GM12878 (cell line): ENCODE measurements at regions of chr12 and their contacts with region 1.

Region 1: GRCh38 chr12:96985480-96986362 is 78.7 kb downstream of the NEDD1 start:
- DNase-seq: no peak
- ATAC-seq: peak; percentile 95
- H3K4me3 ChIP-seq: peak overlapping the region; percentile 28; the same call in 1 of the 2 replicates
- H3K27ac ChIP-seq: no peak overlapping the region
- H3K4me1 ChIP-seq: peaks cover 5% of the 10 kb centered on the region
- H3K27me3 ChIP-seq: peaks cover 0 to 6% of the 10 kb centered on the region in 2 experiments; a peak in 3 of 4 replicates
- CTCF ChIP-seq: peak; percentile 78 to 90 (median 80)
- EP300 ChIP-seq: no peak
- POLR2A ChIP-seq: no peak
- RAD21 ChIP-seq: peak; percentile 84

Region 2: DNA sequence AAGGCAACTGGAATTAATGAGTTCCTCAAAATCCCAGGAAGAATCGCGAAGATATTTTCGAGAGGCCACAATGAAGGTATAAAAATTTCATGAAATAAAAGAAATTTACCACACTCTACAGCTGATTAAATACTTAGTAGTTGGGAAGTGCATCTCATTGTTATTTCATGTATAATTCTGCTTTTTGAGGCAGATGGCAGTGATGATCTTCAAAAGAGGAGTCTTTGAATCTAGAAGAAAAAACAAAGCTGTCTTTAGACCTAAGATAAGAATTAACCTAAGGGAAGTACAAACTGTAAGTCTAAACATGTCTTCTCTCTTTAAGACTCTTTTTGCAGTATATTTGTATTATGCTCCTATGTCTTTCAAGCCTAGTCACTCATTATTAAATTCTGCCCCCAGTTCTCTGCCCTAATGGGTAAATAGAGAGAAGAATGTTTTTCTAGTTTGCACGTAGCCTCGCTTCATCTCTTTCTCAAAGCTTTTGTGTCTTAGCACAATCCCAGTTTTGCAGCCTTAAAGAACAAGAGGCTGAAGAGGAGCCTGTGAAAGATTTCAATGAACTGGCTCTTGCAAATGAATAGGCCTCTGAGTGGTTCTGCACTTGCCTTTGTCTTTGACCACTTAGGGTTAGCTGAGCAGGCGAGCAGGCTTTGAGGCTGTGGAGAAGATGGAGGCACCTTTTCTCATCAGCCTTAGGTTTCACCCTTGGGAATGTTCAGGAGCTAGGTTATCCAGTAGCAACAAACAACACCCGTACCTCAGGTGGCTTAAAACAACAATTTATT is 463.6 kb before region 1 on chr12:
- CTCF ChIA-PET with region 1: interaction called, 17 read pairs
- POLR2A ChIA-PET with region 1: no interaction called
- RAD21 ChIA-PET with region 1: interaction called, 8 read pairs
- SMC1A ChIA-PET with region 1: interaction called, 6 read pairs
- in situ Hi-C with region 1: no loop called
- intact Hi-C with region 1: no loop called
- DNase-seq: no peak
- ATAC-seq: peak; percentile 41; the same call in 2 of the 3 replicates
- H3K4me3 ChIP-seq: no peak overlapping the region
- H3K27ac ChIP-seq: no peak overlapping the region
- H3K4me1 ChIP-seq: peaks cover 5% of the 10 kb centered on the region
- H3K27me3 ChIP-seq: no peaks in the 10 kb centered on the region
- CTCF ChIP-seq: peak in 1 of 3 experiments; percentile 41; a peak in 1 of 6 replicates
- EP300 ChIP-seq: no peak
- POLR2A ChIP-seq: no peak
- RAD21 ChIP-seq: peak; percentile 47; the same call in 1 of the 2 replicates

Region 3: GRCh38 chr12:96578526-96579125 is 407.1 kb before region 1 on chr12:
- CTCF ChIA-PET with region 1: interaction called, 119 read pairs
- POLR2A ChIA-PET with region 1: no interaction called
- RAD21 ChIA-PET with region 1: interaction called, 13 read pairs
- SMC1A ChIA-PET with region 1: interaction called, 19 read pairs
- in situ Hi-C with region 1: loop called (anchors 5 kb)
- intact Hi-C with region 1: loop called (anchors 1 kb)
- DNase-seq: peak; percentile 57
- ATAC-seq: peak; percentile 99
- H3K4me3 ChIP-seq: no peak overlapping the region
- H3K27ac ChIP-seq: no peak overlapping the region
- H3K4me1 ChIP-seq: no peaks in the 10 kb centered on the region
- H3K27me3 ChIP-seq: no peaks in the 10 kb centered on the region
- CTCF ChIP-seq: peak; percentile 52 to 79 (median 57); a peak in 5 of 6 replicates
- EP300 ChIP-seq: no peak
- POLR2A ChIP-seq: no peak
- RAD21 ChIP-seq: peak; percentile 93

Region 4: DNA sequence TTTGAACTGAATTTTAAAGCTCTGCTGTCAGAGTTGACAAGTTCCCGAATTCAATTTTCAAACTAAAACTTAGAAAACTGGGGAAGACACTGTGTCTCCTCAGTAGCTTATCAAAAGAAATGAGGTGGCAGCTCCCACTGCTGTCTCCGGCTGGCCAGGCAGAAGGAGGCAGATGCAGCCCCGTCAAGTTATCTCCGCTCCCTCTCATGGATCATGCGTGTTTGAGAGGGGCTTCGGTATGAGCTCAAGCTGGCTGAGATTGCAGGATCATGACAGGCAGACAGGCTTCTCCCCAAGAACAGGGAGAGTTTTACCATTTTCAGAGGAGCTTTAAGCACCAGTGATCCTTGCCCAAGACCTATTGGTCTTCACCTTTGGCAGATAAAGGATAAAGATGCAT is 10.1 kb after region 1 on chr12:
- CTCF ChIA-PET with region 1: interaction called, 11 read pairs
- POLR2A ChIA-PET with region 1: no interaction called
- RAD21 ChIA-PET with region 1: interaction called, 11 read pairs
- SMC1A ChIA-PET with region 1: interaction called, 4 read pairs
- in situ Hi-C with region 1: no loop called
- intact Hi-C with region 1: no loop called
- DNase-seq: no peak
- ATAC-seq: no peak
- H3K4me3 ChIP-seq: no peak overlapping the region
- H3K27ac ChIP-seq: no peak overlapping the region
- H3K4me1 ChIP-seq: peaks cover 3% of the 10 kb centered on the region; the same call in 1 of the 2 replicates
- H3K27me3 ChIP-seq: no peaks in the 10 kb centered on the region
- CTCF ChIP-seq: no peak
- EP300 ChIP-seq: no peak
- POLR2A ChIP-seq: no peak
- RAD21 ChIP-seq: no peak

Region 5: GRCh38 chr12:97075161-97075953 is 89.6 kb after region 1 on chr12:
- CTCF ChIA-PET with region 1: no interaction called
- POLR2A ChIA-PET with region 1: no interaction called
- RAD21 ChIA-PET with region 1: no interaction called
- SMC1A ChIA-PET with region 1: no interaction called
- in situ Hi-C with region 1: no loop called
- intact Hi-C with region 1: no loop called
- DNase-seq: no peak
- ATAC-seq: no peak
- H3K4me3 ChIP-seq: no peak overlapping the region
- H3K27ac ChIP-seq: no peak overlapping the region
- H3K4me1 ChIP-seq: no peaks in the 10 kb centered on the region
- H3K27me3 ChIP-seq: no peaks in the 10 kb centered on the region
- CTCF ChIP-seq: no peak
- EP300 ChIP-seq: no peak
- POLR2A ChIP-seq: no peak
- RAD21 ChIP-seq: no peak

Region 6: DNA sequence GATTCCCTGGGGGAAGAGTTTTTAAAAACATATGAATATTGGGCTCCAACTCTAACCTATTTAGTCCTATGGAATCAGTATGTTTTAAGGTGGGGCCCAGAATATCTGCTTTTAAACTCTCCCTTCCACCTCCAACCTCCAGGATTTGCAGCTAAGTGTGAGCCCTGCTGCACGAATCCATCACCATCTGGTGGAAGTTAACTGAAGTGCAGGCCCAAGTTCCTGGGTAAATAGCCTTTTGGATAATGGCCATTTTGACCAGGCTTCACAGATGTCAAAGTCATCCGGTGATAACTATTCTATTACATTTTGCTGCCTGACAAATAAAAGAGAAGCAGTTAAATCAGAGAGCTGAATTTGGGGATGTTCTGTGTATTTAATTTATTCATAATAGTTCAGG is 418.8 kb after region 1 on chr12:
- CTCF ChIA-PET with region 1: interaction called, 22 read pairs
- POLR2A ChIA-PET with region 1: no interaction called
- RAD21 ChIA-PET with region 1: no interaction called
- SMC1A ChIA-PET with region 1: interaction called, 11 read pairs
- in situ Hi-C with region 1: no loop called
- intact Hi-C with region 1: loop called (anchors 2 kb)
- DNase-seq: peak; percentile 23
- ATAC-seq: peak; percentile 90
- H3K4me3 ChIP-seq: no peak overlapping the region
- H3K27ac ChIP-seq: no peak overlapping the region
- H3K4me1 ChIP-seq: peaks cover 7% of the 10 kb centered on the region; the same call in 1 of the 2 replicates
- H3K27me3 ChIP-seq: no peaks in the 10 kb centered on the region
- CTCF ChIP-seq: peak; percentile 76 to 84 (median 83)
- EP300 ChIP-seq: no peak
- POLR2A ChIP-seq: no peak
- RAD21 ChIP-seq: peak; percentile 96

Region 7: DNA sequence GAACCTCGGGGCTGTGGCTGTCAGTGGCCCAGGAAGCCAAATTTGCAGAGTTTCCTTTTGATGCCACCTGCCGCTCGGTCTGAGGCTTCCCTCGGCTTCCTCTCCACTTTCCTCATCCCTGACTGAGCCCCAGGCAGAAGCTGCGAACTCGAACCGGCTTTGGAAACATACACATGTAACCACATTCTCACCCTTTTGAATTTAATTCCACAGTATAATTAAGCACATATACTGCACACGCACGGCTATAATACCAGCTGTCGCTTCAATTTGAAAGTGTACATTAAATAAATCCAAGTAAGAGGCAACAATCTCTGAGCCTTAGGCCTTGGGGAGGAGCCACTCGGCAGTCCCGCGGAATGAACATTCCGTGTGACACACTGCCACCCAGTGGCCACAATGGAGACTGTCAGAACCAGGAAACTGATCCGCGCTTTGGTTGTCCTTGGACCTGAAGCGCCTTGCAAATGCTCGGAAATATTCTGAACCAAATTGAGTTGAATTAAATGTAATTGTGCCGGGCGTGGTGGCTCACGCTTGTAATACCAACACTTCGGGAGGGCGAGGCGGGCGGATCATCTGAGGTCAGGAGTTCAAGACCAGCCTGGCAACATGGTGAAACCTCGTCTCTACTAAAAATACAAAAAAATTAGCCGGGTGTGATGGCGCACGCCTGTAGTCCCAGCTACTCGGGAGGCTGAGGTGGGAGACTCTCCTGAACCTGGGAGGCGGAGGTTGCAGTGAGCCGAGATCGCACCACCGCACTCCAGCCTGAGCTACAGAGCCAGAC is 1411.8 kb after region 1 on chr12:
- CTCF ChIA-PET with region 1: interaction called, 27 read pairs
- POLR2A ChIA-PET with region 1: no interaction called
- RAD21 ChIA-PET with region 1: interaction called, 3 read pairs
- SMC1A ChIA-PET with region 1: interaction called, 4 read pairs
- in situ Hi-C with region 1: loop called (anchors 10 kb)
- intact Hi-C with region 1: no loop called
- DNase-seq: peak; percentile 53
- ATAC-seq: peak; percentile 93
- H3K4me3 ChIP-seq: peak overlapping the region; percentile 63; the same call in 1 of the 2 replicates
- H3K27ac ChIP-seq: no peak overlapping the region
- H3K4me1 ChIP-seq: peaks cover 23% of the 10 kb centered on the region
- H3K27me3 ChIP-seq: no peaks in the 10 kb centered on the region
- CTCF ChIP-seq: peak; percentile 76 to 90 (median 87)
- EP300 ChIP-seq: 0 out of 4 replicates have a peak, but pooled peaks of 1 of the 2 experiments have one; percentile 13
- POLR2A ChIP-seq: no peak
- RAD21 ChIP-seq: peak; percentile 84